ENCODE measurements at regions of chr12 and their contacts with region 1.

Region 1: DNA sequence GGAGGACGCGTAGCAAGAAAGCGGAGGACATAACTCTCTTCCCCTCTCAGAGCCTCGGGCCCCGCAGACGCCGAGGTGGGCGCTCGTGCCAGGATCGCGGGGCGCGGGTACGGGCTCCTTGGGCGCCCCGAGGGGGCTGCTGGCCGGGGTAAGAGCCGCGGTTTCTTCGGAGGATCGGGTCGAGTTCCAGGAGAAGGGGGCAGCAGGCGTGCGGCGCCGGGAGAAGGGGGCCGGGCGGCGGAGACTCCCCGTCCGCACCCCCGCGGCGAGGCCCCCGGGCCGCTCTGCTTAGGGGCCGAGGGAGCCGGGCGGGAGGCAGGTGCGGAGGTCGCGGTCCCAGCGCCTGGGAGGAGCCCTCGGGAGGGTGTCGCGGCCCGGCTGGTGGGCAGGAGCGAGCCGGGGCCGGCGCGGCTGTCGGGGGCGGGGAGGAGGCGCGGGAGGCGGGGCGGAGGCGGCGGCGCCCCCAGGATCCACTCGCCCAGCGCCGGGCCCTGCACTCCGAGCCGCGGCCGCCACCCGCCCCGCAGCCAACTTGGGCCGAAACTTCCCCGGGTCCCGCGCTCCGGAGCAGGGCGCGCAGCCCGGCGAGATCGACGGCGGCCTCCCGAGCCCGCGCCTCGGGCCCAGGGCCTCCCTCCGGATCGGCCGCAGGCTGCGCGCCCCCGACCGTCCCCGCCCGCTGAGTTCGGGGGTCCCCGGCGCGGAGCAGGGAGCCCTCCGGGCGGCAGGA is 64.4 kb downstream of the FBXL14 start:
- DNase-seq: peak in 2 of 5 donors; percentile 19 to 35
- ATAC-seq: peak in 1 of 4 donors; percentile 37
- H3K4me3 ChIP-seq: peak overlapping the region; percentile 11 to 68 (median 50)
- H3K27ac ChIP-seq: no peak overlapping the region
- H3K4me1 ChIP-seq: peaks cover 0 to 24% (median 2%) of the 10 kb centered on the region in 12 donors
- H3K27me3 ChIP-seq: peaks cover 5 to 73% (median 18%) of the 10 kb centered on the region in 9 donors
- CTCF ChIP-seq: no peak
- POLR2A ChIP-seq: no peak

Region 2: GRCh38 chr12:1576410-1577241 is 46.6 kb after region 1 on chr12:
- intact Hi-C with region 1: loop called in 1 of 10 experiments (anchors 10 kb)
- DNase-seq: peak in 4 of 5 donors; percentile 40 to 66 (median 43)
- ATAC-seq: peak; percentile 44 to 63 (median 48)
- H3K4me3 ChIP-seq: peak overlapping the region in 9 of 12 donors; percentile 5 to 32 (median 18)
- H3K27ac ChIP-seq: peak overlapping the region in 10 of 12 donors; percentile 3 to 72 (median 22)
- H3K4me1 ChIP-seq: peaks cover 0 to 35% (median 25%) of the 10 kb centered on the region in 12 donors
- H3K27me3 ChIP-seq: no peaks in the 10 kb centered on the region
- CTCF ChIP-seq: no peak
- POLR2A ChIP-seq: no peak